Activated naive CD4-positive, alpha-beta T cell treated with anti-CD3 and anti-CD28 coated beads for 36 hours (primary cell): ENCODE measurements at regions of chr22 and their contacts with region 1.

Region 1: GRCh38 chr22:20495861-20496681 is 476 bp upstream of the KLHL22 start:
- DNase-seq: peak; percentile 92
- H3K4me3 Mint-ChIP-seq: peak overlapping the region; percentile 90
- H3K27ac Mint-ChIP-seq: peak overlapping the region; percentile 81
- H3K4me1 Mint-ChIP-seq: peaks cover 35% of the 10 kb centered on the region
- H3K27me3 Mint-ChIP-seq: no peaks in the 10 kb centered on the region

Region 2: GRCh38 chr22:20418211-20418788 is 77.8 kb before region 1 on chr22:
- CTCF ChIA-PET with region 1: interaction called, 9 read pairs
- intact Hi-C with region 1: loop called (anchors 1 kb)
- DNase-seq: peak; percentile 70
- H3K4me3 Mint-ChIP-seq: no peak overlapping the region
- H3K27ac Mint-ChIP-seq: no peak overlapping the region
- H3K4me1 Mint-ChIP-seq: no peaks in the 10 kb centered on the region
- H3K27me3 Mint-ChIP-seq: peaks cover under 1% of the 10 kb centered on the region

Region 3: GRCh38 chr22:20430720-20431510 is 65.2 kb before region 1 on chr22:
- CTCF ChIA-PET with region 1: no interaction called
- intact Hi-C with region 1: loop called (anchors 1 kb)
- DNase-seq: peak; percentile 59
- H3K4me3 Mint-ChIP-seq: peak overlapping the region; percentile 63
- H3K27ac Mint-ChIP-seq: no peak overlapping the region
- H3K4me1 Mint-ChIP-seq: peaks cover 18% of the 10 kb centered on the region
- H3K27me3 Mint-ChIP-seq: peaks cover 58% of the 10 kb centered on the region

Region 4: DNA sequence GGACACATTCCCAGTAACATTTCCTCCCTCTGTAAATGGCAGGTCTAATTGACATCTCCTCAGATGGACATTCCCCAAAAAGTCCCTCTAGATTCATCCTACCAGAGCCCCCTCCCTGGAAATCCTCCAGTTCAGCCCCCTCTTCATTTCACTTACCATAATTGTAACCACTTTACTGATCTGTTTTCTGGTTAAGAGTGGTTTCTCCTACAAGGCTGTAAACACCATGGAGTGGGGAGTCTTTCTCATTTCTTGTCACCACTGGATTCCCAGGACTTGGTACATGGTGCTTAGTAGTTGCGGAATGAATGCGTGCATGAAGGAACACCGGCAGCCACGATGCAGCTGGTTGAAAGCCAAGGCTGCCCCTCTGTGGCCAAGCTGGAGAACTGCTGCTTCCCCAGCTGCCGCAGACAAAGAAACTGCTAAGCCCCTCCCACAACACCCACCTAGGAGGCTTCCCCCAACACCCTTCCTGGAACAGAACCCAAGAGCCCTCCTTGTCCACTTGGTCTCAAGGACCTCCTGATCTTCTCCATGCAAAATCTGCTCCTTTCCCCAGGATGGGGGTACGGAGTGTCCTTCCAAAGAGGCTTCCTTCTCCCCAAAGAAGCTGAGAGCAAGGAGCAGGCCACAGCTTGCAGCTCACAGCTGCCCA is 39.9 kb before region 1 on chr22:
- CTCF ChIA-PET with region 1: interaction called, 5 read pairs
- intact Hi-C with region 1: loop called (anchors 2 kb)
- DNase-seq: peak; percentile 84
- H3K4me3 Mint-ChIP-seq: no peak overlapping the region
- H3K27ac Mint-ChIP-seq: no peak overlapping the region
- H3K4me1 Mint-ChIP-seq: peaks cover 23% of the 10 kb centered on the region
- H3K27me3 Mint-ChIP-seq: no peaks in the 10 kb centered on the region

Region 5: GRCh38 chr22:20463324-20464095 is 32.6 kb before region 1 on chr22:
- CTCF ChIA-PET with region 1: interaction called, 5 read pairs
- intact Hi-C with region 1: loop called (anchors 1 kb)
- DNase-seq: peak; percentile 34
- H3K4me3 Mint-ChIP-seq: peak overlapping the region; percentile 16
- H3K27ac Mint-ChIP-seq: peak overlapping the region; percentile 87
- H3K4me1 Mint-ChIP-seq: peaks cover 53% of the 10 kb centered on the region
- H3K27me3 Mint-ChIP-seq: no peaks in the 10 kb centered on the region

Region 6: GRCh38 chr22:20475115-20475436 is 21.0 kb before region 1 on chr22:
- CTCF ChIA-PET with region 1: interaction called, 3 read pairs
- intact Hi-C with region 1: loop called (anchors 2 kb)
- DNase-seq: no peak
- H3K4me3 Mint-ChIP-seq: no peak overlapping the region
- H3K27ac Mint-ChIP-seq: peak overlapping the region; percentile 83
- H3K4me1 Mint-ChIP-seq: peaks cover 38% of the 10 kb centered on the region
- H3K27me3 Mint-ChIP-seq: no peaks in the 10 kb centered on the region

Region 7: DNA sequence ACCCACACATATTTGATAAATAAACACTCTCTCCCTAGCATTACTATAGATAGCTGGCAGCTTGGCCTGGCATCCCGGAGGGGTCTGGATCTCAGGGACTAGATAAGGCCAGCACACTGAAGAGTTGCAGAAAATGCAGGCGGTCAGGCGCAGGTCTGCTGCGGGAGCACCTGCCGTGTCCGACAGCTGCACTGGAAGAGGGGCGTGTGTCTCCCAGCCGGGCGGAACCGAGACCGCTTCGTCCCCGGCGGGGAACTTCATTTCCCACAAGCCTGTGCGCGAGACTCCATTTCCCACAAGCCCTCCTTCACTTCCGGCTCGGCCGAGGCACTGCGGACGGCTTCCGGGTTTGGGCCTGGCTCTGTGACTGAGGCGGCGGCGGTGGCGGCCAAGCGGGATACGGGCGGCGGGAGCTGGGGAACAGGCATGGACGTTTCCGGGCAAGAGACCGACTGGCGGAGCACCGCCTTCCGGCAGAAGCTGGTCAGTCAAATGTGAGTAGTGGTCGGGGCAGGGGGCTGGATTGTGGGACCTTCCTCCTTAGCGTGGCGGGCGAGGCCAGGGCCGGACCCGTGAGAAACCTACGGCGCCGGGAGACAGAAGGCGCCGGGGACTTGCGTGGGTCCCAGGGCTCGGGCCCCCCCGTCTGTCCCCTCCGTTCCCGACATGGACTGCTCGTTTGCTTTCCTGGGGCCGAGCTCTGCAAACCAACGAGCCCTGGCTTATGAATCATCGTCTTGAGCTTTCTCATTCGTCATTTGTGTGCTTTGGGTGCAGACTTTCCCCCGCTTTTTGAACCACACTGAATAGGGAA is 11.4 kb after region 1 on chr22 and contains the start of gene MED15:
- CTCF ChIA-PET with region 1: interaction called, 3 read pairs
- intact Hi-C with region 1: loop called (anchors 1 kb)
- DNase-seq: peak; percentile 94
- H3K4me3 Mint-ChIP-seq: peak within 1 kb of the TSS; percentile 98
- H3K27ac Mint-ChIP-seq: peak within 1 kb of the TSS; percentile 98
- H3K4me1 Mint-ChIP-seq: peaks cover 44% of the 10 kb centered on the region
- H3K27me3 Mint-ChIP-seq: no peaks in the 10 kb centered on the region
- total RNA-seq, gene MED15: 94.7 to 108 TPM